Dendritic cell treated with granulocyte-macrophage colony-stimulating factor and Interleukin-4, amounts not matched to agents 40 ng/mL and 50 ng/mL, for 4 days (primary cell): ENCODE measurements at regions of chr17 and their contacts with region 1.

Region 1: GRCh38 chr17:68057531-68057952 is 22.0 kb downstream of the KPNA2 start:
- H3K4me3 Mint-ChIP-seq: no peak overlapping the region
- H3K27ac Mint-ChIP-seq: no peak overlapping the region
- H3K4me1 Mint-ChIP-seq: peaks cover 19% of the 10 kb centered on the region
- H3K27me3 Mint-ChIP-seq: no peaks in the 10 kb centered on the region

Region 2: DNA sequence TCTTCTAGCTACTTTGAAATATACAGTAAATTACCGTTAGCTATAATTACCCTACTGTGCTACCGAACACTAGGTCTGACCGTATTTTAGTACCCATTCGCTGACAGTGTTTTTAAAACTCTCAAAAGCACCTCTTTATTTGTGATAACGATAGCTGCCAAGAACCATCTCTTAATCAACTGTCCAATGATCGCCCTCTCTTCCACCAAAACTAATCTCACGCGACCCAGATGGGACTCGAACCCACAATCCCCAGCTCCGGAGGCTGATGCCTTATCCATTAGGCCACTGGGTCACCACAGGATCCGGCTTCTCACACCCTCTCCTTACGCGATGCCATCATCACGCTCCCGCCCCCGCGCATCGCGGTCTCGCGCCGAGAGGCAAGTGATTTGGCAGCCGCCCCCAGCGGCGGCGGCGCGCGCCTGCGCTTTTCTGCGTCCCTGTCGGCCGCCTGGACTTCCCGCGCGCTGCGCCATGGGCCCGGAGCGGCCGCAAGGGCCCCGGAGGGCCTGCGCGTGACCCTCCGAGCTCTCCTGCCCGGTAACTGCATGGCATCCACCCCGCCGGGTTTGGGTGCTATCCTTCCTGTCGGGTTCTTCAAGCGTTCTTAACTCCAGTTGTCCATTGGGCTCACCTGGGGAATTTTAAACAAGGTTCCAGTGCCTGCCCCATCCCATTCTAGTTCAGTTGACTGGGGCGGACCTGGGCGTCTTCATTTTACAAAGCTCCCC is 37.7 kb before region 1 on chr17:
- intact Hi-C with region 1: no loop called
- H3K4me3 Mint-ChIP-seq: peak overlapping the region; percentile 91
- H3K27ac Mint-ChIP-seq: peak overlapping the region; percentile 91
- H3K4me1 Mint-ChIP-seq: peaks cover 17% of the 10 kb centered on the region
- H3K27me3 Mint-ChIP-seq: peaks cover 1% of the 10 kb centered on the region

Region 3: DNA sequence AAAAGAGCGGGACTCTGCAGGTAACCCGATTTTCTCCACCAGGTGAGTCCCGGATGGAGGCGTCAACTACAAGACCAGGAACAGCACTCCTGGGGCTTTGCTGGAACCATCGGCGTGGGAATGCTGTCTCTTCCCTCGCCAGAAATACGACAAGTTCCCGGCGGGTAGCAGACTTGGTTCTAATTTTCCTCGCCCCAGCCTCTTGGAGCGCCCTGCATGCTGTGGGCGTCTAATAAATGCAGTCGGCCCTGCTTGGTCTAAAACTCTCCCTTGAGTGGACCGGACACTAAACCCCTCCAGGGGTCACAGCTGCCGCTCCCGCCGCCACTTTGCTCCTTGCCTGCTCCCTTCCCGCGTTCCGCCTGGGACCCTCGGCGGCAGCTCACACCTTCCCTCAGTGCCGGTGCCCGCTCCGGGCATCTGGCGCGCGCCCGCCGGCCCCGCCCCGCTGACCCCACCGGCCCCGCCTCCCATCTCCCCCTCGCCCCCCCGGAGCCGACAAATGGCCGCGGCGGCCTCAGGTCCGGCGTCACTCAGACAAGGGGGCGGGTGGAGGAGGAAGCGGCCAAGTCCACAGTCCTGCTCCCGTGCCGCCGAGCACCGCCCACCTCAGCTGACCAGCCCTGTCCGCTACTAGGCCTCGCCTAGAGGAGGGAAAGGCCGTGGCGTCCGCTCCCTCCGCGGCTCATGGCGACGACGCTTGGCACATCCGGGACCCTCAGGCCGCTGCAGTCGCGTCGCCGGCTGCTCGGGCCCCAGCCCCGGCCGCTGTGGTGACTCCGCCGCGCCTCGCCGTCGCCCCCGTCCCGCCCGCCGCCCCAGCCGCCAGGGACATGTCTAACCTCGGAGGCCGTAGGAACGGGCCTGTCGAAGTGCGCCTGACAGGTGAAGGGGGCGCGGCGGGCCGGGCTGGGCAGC is 43.8 kb after region 1 on chr17:
- intact Hi-C with region 1: loop called (anchors 10 kb)
- H3K4me3 Mint-ChIP-seq: peak overlapping the region; percentile 92
- H3K27ac Mint-ChIP-seq: peak overlapping the region; percentile 95
- H3K4me1 Mint-ChIP-seq: peaks cover 26% of the 10 kb centered on the region
- H3K27me3 Mint-ChIP-seq: no peaks in the 10 kb centered on the region

Region 4: DNA sequence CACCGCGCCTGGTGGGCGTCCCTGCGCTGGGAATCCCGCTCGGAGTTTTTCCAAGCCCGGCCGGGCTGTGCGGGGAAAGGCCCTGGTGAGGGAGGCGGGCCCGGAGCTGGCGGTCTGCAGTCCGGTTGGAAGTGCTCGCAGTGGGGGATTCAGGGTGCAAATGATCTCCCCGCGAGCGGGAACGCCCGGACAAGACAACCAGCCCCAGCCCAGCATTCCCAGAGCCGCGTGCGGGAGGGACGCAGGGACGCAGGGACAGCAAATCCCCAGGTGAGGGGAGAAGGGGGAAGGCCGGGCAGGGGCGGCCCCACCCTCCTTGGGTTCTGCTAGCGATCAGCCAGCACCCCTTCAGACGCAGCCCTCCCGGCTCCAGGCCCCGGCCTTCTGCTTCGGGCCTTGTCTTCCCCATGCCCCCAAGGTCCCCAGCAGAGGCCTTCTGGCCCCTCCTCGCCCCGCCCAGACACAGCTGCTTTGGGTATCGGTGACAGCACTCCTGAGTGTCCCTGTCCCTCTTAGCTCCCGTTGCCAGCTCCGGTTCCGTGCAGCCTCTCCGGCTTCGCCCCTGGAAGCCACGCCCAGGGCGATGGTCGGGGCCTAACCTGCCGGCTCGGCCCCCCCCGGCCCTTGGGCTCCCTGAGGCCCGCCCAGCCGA is 139.5 kb after region 1 on chr17:
- intact Hi-C with region 1: loop called (anchors 10 kb)
- H3K4me3 Mint-ChIP-seq: peak overlapping the region; percentile 25
- H3K27ac Mint-ChIP-seq: no peak overlapping the region
- H3K4me1 Mint-ChIP-seq: peaks cover 46% of the 10 kb centered on the region
- H3K27me3 Mint-ChIP-seq: peaks cover 83% of the 10 kb centered on the region